ENCODE measurements at regions of chr4 and their contacts with region 1.

Region 1: GRCh38 chr4:76949276-76950051 is at the start of gene SEPTIN11:
- DNase-seq: peak; percentile 92
- H3K4me3 ChIP-seq: peak within 1 kb of the TSS; percentile 63
- H3K27ac ChIP-seq: peak within 1 kb of the TSS; percentile 82
- H3K4me1 ChIP-seq: peaks cover 26% of the 10 kb centered on the region
- H3K27me3 ChIP-seq: no peaks in the 10 kb centered on the region
- CTCF ChIP-seq: no peak
- total RNA-seq, gene SEPTIN11: 121 and 125 TPM in 2 replicates

Region 2: GRCh38 chr4:76511947-76512346 is 437.5 kb before region 1 on chr4:
- CTCF ChIA-PET with region 1: no interaction called
- POLR2A ChIA-PET with region 1: no interaction called
- intact Hi-C with region 1: loop called (anchors 2 kb)
- DNase-seq: no peak
- H3K4me3 ChIP-seq: no peak overlapping the region
- H3K27ac ChIP-seq: no peak overlapping the region
- H3K4me1 ChIP-seq: peaks cover under 1% of the 10 kb centered on the region
- H3K27me3 ChIP-seq: no peaks in the 10 kb centered on the region
- CTCF ChIP-seq: no peak

Region 3: DNA sequence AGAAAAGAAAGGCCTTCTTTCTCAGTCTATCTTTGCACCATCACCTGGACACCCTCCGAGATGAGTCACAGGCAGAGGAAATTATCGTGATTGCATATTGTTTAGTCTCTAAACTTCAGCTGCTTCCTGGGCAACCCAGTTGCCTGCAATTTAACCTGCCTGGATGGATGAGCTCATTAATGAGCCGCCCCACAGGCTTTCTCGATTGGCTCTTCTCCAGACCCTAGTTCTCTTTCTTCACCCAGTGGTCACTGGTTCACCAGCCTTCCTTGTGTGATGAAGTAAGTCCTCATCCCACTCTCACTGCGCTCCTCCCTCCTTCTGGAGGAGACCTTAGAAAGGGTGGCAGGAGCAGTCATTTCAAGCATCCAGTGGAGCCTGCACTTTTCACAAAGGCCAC is 145.9 kb before region 1 on chr4:
- CTCF ChIA-PET with region 1: no interaction called
- POLR2A ChIA-PET with region 1: no interaction called
- intact Hi-C with region 1: loop called (anchors 5 kb)
- DNase-seq: peak; percentile 78
- H3K4me3 ChIP-seq: no peak overlapping the region
- H3K27ac ChIP-seq: peak overlapping the region; percentile 70
- H3K4me1 ChIP-seq: peaks cover 32% of the 10 kb centered on the region
- H3K27me3 ChIP-seq: no peaks in the 10 kb centered on the region
- CTCF ChIP-seq: no peak

Region 4: DNA sequence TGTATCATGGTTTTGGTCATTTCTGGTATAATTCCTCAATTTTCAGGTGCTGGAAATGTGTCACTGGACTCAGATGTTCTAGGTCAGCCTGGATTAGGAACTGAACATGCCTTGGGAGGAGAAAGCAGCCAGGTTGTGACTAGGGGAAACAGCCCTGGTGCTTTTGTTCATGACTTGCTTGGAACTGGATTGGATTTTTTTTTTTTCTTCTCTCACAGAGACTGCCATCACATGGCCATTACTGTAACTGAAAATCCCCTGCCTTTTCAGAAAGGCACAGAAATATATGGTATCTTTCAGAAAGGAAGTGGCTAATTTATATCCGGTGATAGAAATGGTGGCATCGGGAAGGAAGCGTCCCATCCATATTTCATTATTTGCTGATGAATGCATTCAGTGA is 34.7 kb after region 1 on chr4:
- CTCF ChIA-PET with region 1: no interaction called
- POLR2A ChIA-PET with region 1: no interaction called
- intact Hi-C with region 1: loop called (anchors 2 kb)
- DNase-seq: peak; percentile 76
- H3K4me3 ChIP-seq: peak overlapping the region; percentile 32
- H3K27ac ChIP-seq: peak overlapping the region; percentile 87
- H3K4me1 ChIP-seq: peaks cover 66% of the 10 kb centered on the region
- H3K27me3 ChIP-seq: no peaks in the 10 kb centered on the region
- CTCF ChIP-seq: peak; percentile 58

Region 5: DNA sequence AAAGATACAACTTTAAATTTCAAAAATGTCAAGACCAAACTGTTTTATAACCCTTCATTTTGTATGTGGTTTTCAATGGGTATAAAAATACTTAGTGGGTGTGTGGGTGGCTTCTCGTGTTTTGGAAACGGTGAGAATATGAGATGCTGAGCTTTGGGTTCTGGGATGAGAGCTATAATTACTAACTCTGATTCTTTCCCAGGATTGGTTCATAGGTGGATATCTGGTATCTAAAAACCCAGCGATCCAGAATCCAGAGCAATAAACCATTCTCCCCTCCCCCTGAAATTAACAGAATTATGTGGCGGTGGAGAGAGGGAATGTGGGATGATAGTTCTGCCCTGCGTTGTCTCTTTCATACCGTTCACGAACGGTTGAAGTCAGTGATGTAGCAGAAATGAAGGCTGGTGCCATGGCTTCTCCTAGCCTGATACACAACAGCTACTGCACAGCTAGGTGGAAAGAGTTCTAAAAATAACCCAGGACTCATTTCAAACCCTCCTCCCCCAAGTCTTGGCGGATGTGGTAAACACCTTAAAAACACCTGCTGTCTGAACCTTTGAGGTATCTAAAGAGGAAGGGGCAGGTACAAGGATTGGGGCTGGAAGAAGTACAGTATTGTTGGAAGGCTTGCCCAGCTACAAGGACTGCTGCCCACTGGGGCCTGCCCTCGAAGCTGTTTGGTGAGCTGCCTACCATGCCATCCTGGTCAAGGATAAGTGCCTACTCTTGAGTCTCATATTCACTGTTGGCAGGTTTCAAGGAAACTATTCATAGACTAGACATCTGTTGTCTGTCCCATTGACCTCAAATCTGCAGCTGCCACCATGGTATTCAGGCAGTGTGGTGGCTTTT is 44.5 kb after region 1 on chr4:
- CTCF ChIA-PET with region 1: no interaction called
- POLR2A ChIA-PET with region 1: interaction called, 3 read pairs
- intact Hi-C with region 1: loop called (anchors 5 kb)
- DNase-seq: no peak
- H3K4me3 ChIP-seq: no peak overlapping the region
- H3K27ac ChIP-seq: no peak overlapping the region
- H3K4me1 ChIP-seq: no peaks in the 10 kb centered on the region
- H3K27me3 ChIP-seq: no peaks in the 10 kb centered on the region
- CTCF ChIP-seq: no peak

Region 6: DNA sequence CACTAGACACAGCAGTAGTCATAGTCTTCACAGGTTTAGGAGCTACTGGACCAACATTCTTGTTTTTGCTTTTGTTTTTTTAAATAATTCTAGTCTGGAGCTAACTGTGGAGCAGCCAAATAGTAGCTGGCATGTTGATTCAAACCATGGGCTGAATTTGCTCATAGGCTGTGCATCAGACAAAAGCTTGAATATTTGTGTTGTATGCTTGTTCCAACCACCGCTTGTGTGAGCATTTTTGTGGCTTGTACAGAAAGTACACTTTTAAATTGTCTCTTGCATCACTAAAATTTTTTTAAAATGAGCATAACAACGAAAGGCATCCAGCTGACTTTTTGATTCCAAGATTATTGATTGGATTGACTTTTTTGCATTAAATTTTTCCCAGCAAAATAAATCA is 86.7 kb after region 1 on chr4:
- CTCF ChIA-PET with region 1: no interaction called
- POLR2A ChIA-PET with region 1: no interaction called
- intact Hi-C with region 1: loop called (anchors 10 kb)
- DNase-seq: no peak
- H3K4me3 ChIP-seq: no peak overlapping the region
- H3K27ac ChIP-seq: no peak overlapping the region
- H3K4me1 ChIP-seq: no peaks in the 10 kb centered on the region
- H3K27me3 ChIP-seq: no peaks in the 10 kb centered on the region
- CTCF ChIP-seq: no peak

Region 7: DNA sequence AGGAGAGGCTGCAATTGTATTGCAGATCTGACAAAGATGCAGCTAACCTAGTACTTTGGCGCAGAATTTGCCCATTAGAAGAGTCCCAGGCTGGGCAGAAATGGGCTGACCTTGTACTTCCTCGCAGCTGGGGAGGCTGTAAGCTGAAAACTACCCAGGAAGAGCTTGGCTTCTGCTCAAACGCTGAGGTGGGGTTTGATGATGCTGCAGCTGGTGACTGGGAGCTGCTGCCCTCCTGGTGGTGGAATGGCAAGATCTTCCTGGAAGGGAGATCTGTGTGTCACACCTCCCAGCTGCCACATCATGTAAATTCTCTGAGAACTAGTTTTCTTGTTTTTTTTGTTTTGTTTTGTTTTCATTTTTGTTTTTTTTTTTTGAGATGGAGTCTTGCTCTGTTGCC is 225.0 kb after region 1 on chr4:
- CTCF ChIA-PET with region 1: no interaction called
- POLR2A ChIA-PET with region 1: no interaction called
- intact Hi-C with region 1: no loop called
- DNase-seq: no peak
- H3K4me3 ChIP-seq: no peak overlapping the region
- H3K27ac ChIP-seq: no peak overlapping the region
- H3K4me1 ChIP-seq: no peaks in the 10 kb centered on the region
- H3K27me3 ChIP-seq: no peaks in the 10 kb centered on the region
- CTCF ChIP-seq: no peak

Measured in A673 (cell line).